IMR-90 (cell line): ENCODE measurements at regions of chr7 and their contacts with region 1.

Region 1: DNA sequence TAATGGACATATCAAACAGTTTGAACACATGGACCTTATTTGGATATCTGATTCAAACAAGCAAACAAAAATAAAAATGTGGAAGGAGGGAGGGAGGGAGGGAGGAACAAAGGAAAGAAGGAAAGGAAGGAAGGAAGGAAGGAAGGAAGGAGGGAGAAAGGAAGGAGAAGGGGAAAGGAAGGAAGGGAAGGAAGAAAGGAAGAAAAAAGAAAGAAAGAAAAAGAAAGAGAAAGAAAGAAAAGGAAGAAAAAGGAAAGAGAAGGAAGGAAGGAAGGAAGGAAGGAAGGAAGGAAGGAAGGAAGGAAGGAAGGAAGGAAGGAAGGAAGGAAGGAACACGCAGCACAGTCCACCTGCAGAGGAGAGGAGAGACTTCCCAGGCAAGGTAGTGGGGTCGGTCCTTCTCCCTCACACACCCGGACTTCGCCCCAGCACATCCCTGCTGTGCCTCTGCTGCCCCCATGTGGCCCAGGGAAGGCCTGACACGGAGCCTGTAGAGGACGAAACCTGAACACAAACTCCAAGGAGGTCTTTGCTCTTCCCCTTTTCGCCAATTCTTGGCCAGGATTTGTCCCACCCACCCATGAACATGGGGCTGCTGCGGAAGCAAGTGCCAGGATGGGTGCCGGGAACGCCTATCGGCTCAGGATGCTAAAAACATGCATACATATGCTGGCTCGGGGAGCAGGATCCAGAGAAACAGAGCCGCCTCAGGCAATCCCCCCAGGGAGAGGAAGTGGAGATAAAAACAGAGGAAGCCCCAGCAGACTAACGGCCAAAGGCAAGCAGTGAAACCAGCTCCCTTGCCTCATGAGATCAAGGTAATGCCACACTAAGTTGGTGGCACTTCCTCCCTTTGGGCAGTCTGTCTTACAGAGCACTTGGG is 52.3 kb upstream of the DGKI start:
- DNase-seq: peak; percentile 66
- ATAC-seq: peak; percentile 94
- H3K4me3 ChIP-seq: no peak overlapping the region
- H3K27ac ChIP-seq: no peak overlapping the region
- H3K4me1 ChIP-seq: no peaks in the 10 kb centered on the region
- H3K27me3 ChIP-seq: no peaks in the 10 kb centered on the region
- CTCF ChIP-seq: peak; percentile 90
- POLR2A ChIP-seq: no peak
- RAD21 ChIP-seq: peak; percentile 97

Region 2: DNA sequence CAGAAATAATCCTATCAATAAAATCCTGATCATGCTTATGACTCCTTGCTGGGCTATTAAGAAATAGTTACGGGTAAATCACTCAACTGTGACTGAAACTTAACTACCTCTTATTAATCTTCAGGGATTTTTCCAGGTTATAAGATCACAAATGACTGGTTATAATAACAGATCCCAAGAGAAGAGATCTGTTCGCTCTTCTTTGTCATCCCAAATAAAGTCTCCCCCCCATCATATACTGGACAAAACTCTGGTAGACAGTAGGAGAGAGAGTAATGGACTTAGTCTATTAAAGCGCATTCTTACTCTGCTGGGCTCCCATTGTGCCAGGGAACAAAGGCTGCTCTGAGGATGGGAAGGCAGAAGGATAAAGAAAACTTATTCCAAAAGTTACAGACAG is 286.1 kb before region 1 on chr7:
- CTCF ChIA-PET with region 1: interaction called, 3 read pairs
- POLR2A ChIA-PET with region 1: no interaction called
- dilution Hi-C with region 1: no loop called
- in situ Hi-C with region 1: loop called (anchors 5 kb)
- intact Hi-C with region 1: no loop called
- DNase-seq: no peak
- ATAC-seq: no peak
- H3K4me3 ChIP-seq: no peak overlapping the region
- H3K27ac ChIP-seq: no peak overlapping the region
- H3K4me1 ChIP-seq: no peaks in the 10 kb centered on the region
- H3K27me3 ChIP-seq: no peaks in the 10 kb centered on the region
- CTCF ChIP-seq: no peak
- POLR2A ChIP-seq: no peak
- RAD21 ChIP-seq: no peak

Region 3: GRCh38 chr7:137816696-137817320 is 82.3 kb before region 1 on chr7:
- CTCF ChIA-PET with region 1: no interaction called
- POLR2A ChIA-PET with region 1: no interaction called
- dilution Hi-C with region 1: no loop called
- in situ Hi-C with region 1: no loop called
- intact Hi-C with region 1: loop called (anchors 1 kb)
- DNase-seq: no peak
- ATAC-seq: no peak
- H3K4me3 ChIP-seq: no peak overlapping the region
- H3K27ac ChIP-seq: no peak overlapping the region
- H3K4me1 ChIP-seq: peaks cover 11% of the 10 kb centered on the region
- H3K27me3 ChIP-seq: no peaks in the 10 kb centered on the region
- CTCF ChIP-seq: peak; percentile 37
- POLR2A ChIP-seq: no peak
- RAD21 ChIP-seq: peak; percentile 45

Region 4: DNA sequence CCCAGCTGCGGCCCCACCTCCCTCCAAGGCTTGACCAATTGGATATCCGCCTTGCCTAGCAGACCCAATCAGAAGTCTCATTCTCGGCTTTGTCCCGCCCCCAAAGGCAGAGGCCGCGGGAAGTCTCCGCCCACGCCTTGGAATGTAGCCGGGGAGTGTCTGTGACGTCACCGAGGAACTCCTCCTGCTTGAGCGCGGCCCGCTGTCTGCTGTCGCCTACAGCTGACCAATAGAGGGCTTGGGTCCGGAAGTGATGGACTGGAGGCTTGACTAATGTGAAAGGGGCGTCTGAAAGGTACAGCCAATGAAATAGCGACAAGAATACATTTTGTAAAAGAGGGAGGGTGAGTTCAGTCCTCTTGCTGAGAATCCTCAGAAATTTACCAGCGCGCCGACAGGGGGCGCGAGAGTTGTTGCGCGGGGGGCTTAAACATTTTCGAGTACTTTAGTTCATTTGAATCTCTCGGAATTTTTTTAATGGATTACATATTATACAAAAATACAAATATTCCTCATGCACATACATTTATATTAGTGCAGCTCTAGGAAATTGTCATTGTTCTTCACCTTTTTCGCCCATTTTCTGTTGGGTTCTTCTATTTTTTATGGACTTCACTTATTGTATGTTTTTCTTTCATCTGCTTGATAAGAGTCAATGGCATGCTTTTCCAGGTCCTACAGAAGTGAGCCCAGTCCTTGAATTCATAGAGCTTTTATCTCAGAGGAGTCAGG is 103.2 kb after region 1 on chr7:
- CTCF ChIA-PET with region 1: interaction called, 7 read pairs
- POLR2A ChIA-PET with region 1: no interaction called
- dilution Hi-C with region 1: no loop called
- in situ Hi-C with region 1: no loop called
- intact Hi-C with region 1: loop called (anchors 2 kb)
- DNase-seq: peak; percentile 100
- ATAC-seq: peak; percentile 90
- H3K4me3 ChIP-seq: peak overlapping the region; percentile 85
- H3K27ac ChIP-seq: no peak overlapping the region; the same call in 1 of the 2 replicates
- H3K4me1 ChIP-seq: peaks cover 6% of the 10 kb centered on the region
- H3K27me3 ChIP-seq: no peaks in the 10 kb centered on the region
- CTCF ChIP-seq: peak; percentile 95
- POLR2A ChIP-seq: no peak
- RAD21 ChIP-seq: peak; percentile 53

Region 5: GRCh38 chr7:138008547-138009349 is 109.7 kb after region 1 on chr7:
- CTCF ChIA-PET with region 1: interaction called, 6 read pairs
- POLR2A ChIA-PET with region 1: no interaction called
- dilution Hi-C with region 1: no loop called
- in situ Hi-C with region 1: no loop called
- intact Hi-C with region 1: loop called (anchors 1 kb)
- DNase-seq: peak; percentile 68
- ATAC-seq: peak; percentile 87
- H3K4me3 ChIP-seq: no peak overlapping the region
- H3K27ac ChIP-seq: no peak overlapping the region; the same call in 1 of the 2 replicates
- H3K4me1 ChIP-seq: peaks cover 5% of the 10 kb centered on the region; the same call in 1 of the 2 replicates
- H3K27me3 ChIP-seq: peaks cover 5% of the 10 kb centered on the region; the same call in 1 of the 2 replicates
- CTCF ChIP-seq: peak; percentile 94
- POLR2A ChIP-seq: no peak
- RAD21 ChIP-seq: peak; percentile 90

Region 6: DNA sequence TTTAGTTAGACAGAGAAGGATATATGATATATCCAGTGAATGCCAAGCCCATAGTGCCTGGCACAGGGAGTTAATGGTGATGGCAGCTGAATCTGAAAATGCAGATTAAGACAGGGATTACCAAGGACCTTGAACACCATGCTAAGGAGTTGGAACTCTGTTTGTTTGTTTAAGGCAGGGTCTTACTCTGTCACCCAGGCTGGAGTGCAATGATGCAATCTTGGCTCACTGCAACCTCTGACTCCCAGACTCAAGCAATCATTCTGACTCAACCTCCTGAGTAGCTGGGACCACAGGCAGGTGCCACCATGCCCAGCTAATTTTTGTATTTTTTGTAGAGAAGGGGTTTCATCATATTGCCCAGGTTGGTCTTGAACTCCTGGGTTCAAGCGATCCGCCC is 178.7 kb after region 1 on chr7:
- CTCF ChIA-PET with region 1: no interaction called
- POLR2A ChIA-PET with region 1: no interaction called
- dilution Hi-C with region 1: no loop called
- in situ Hi-C with region 1: no loop called
- intact Hi-C with region 1: no loop called
- DNase-seq: no peak
- ATAC-seq: no peak
- H3K4me3 ChIP-seq: no peak overlapping the region
- H3K27ac ChIP-seq: no peak overlapping the region
- H3K4me1 ChIP-seq: no peaks in the 10 kb centered on the region
- H3K27me3 ChIP-seq: no peaks in the 10 kb centered on the region
- CTCF ChIP-seq: no peak
- POLR2A ChIP-seq: no peak
- RAD21 ChIP-seq: no peak

Region 7: GRCh38 chr7:138161600-138162081 is 262.6 kb after region 1 on chr7:
- CTCF ChIA-PET with region 1: no interaction called
- POLR2A ChIA-PET with region 1: no interaction called
- dilution Hi-C with region 1: no loop called
- in situ Hi-C with region 1: no loop called
- intact Hi-C with region 1: loop called (anchors 1 kb)
- DNase-seq: peak; percentile 81
- ATAC-seq: peak; percentile 95
- H3K4me3 ChIP-seq: no peak overlapping the region
- H3K27ac ChIP-seq: no peak overlapping the region
- H3K4me1 ChIP-seq: no peaks in the 10 kb centered on the region
- H3K27me3 ChIP-seq: no peaks in the 10 kb centered on the region
- CTCF ChIP-seq: peak; percentile 64
- POLR2A ChIP-seq: no peak
- RAD21 ChIP-seq: peak; percentile 60